Heart right ventricle (tissue), 16 donors: ENCODE measurements at regions of chr17 and their contacts with region 1.

Region 1: DNA sequence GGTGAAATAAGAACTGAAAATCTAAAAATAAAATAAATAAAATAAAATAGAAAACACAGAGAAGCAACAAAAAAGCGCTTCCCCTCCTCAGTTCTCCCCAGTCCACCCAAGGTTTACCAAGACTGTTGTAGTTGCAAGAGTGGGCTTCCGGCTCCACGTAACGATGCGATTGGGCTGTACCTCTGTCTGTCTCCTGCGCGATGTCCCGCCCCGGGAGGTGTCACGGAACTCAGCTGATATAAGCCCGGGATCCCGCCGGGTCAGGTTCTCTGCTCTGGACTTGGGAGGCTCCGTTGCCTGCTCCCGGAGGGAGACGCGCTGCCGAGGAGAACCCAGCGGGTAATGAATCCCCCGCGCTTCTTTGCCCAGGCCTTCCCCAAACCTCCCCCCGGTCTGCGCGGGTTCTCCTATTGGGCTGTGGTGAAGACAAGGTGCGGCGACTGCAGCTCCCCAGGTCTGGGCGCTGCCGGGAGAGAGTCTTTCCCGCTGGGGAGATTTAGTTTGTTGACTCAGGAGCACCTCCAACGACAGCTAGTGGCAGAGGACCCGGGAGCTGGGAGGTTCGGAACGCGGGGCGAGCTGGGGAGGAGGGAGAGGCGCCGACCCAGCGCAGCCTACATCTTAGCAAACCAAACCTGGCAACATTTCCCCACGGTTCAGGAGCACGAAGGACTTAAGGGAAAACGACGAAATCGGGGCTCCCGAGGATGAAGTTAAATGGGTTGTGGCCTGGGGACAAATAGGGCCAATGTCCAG is at the start of gene SLFN5:
- DNase-seq: peak; percentile 94 to 95
- ATAC-seq: peak; percentile 95 to 98 (median 97)
- H3K4me3 ChIP-seq: peak within 1 kb of the TSS; percentile 47 to 95 (median 76)
- H3K27ac ChIP-seq: peak within 1 kb of the TSS; percentile 77 to 99 (median 96)
- H3K4me1 ChIP-seq: peaks cover 0 to 57% (median 29%) of the 10 kb centered on the region in 9 donors
- H3K27me3 ChIP-seq: no peaks in the 10 kb centered on the region
- CTCF ChIP-seq: peak in 1 of 9 donors; percentile 19
- total RNA-seq, gene SLFN5: 11.0 to 29.8 (median 15.9) TPM

Region 2: DNA sequence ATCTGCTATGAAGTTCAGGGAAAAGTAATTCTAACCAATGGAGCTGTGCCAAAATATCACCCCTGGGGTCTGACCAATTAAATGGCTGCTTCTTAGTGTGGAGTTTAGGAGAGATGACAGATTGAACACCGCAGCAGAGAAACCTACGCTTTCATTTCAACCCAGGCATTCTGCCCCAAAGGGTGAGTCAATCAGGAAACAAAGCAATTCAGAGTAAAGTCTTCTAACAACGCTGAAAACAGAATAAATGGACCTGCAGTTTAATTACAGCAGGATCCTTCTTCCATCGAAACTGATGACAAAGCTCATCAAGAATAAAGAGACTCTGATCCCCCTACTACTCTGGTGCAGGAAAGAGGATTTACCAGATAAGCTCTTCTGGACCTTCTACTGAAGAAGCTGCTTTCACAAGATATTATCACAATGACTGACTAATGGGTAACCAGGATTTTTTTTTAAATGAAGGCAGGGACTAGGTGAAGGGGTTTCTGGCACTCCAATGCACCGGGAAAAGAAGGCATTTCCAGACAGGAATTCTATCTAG is 196.2 kb before region 1 on chr17:
- intact Hi-C with region 1: no loop called
- DNase-seq: no peak
- ATAC-seq: no peak
- H3K4me3 ChIP-seq: peak overlapping the region in 1 of 10 donors; percentile 8
- H3K27ac ChIP-seq: peak overlapping the region in 1 of 10 donors; percentile 59
- H3K4me1 ChIP-seq: peaks cover 0 to 50% (median 16%) of the 10 kb centered on the region in 9 donors
- H3K27me3 ChIP-seq: no peaks in the 10 kb centered on the region
- CTCF ChIP-seq: no peak

Region 3: GRCh38 chr17:35170968-35171771 is 71.8 kb before region 1 on chr17:
- intact Hi-C with region 1: loop called in 1 of 10 experiments (anchors 10 kb)
- DNase-seq: no peak
- ATAC-seq: peak in 3 of 8 donors; percentile 16 to 46 (median 32)
- H3K4me3 ChIP-seq: no peak overlapping the region
- H3K27ac ChIP-seq: no peak overlapping the region
- H3K4me1 ChIP-seq: peaks cover 0 to 15% (median 0%) of the 10 kb centered on the region in 9 donors
- H3K27me3 ChIP-seq: no peaks in the 10 kb centered on the region
- CTCF ChIP-seq: peak in 7 of 9 donors; percentile 32 to 56 (median 41)

Region 4: GRCh38 chr17:35283767-35284166 is 40.8 kb after region 1 on chr17:
- intact Hi-C with region 1: no loop called
- DNase-seq: no peak
- ATAC-seq: no peak
- H3K4me3 ChIP-seq: no peak overlapping the region
- H3K27ac ChIP-seq: no peak overlapping the region
- H3K4me1 ChIP-seq: no peaks in the 10 kb centered on the region
- H3K27me3 ChIP-seq: peaks cover 0 to 3% (median 0%) of the 10 kb centered on the region in 7 donors
- CTCF ChIP-seq: no peak

Region 5: GRCh38 chr17:35345926-35346771 is 103.2 kb after region 1 on chr17:
- intact Hi-C with region 1: loop called in 1 of 10 experiments (anchors 5 kb)
- DNase-seq: peak; percentile 78 to 87
- ATAC-seq: peak; percentile 92 to 97 (median 94)
- H3K4me3 ChIP-seq: peak overlapping the region; percentile 16 to 56 (median 50)
- H3K27ac ChIP-seq: peak overlapping the region; percentile 16 to 96 (median 88)
- H3K4me1 ChIP-seq: peaks cover 3 to 54% (median 23%) of the 10 kb centered on the region in 9 donors
- H3K27me3 ChIP-seq: peaks cover 0 to 40% (median 11%) of the 10 kb centered on the region in 7 donors
- CTCF ChIP-seq: no peak

Region 6: GRCh38 chr17:35529866-35530265 is 286.9 kb after region 1 on chr17:
- intact Hi-C with region 1: loop called in 1 of 10 experiments (anchors 5 kb)
- DNase-seq: no peak
- ATAC-seq: no peak
- H3K4me3 ChIP-seq: no peak overlapping the region
- H3K27ac ChIP-seq: no peak overlapping the region
- H3K4me1 ChIP-seq: peaks cover 0 to 6% (median 0%) of the 10 kb centered on the region in 9 donors
- H3K27me3 ChIP-seq: no peaks in the 10 kb centered on the region
- CTCF ChIP-seq: no peak